ENCODE measurements at regions of chr2 and their contacts with region 1.

Region 1: DNA sequence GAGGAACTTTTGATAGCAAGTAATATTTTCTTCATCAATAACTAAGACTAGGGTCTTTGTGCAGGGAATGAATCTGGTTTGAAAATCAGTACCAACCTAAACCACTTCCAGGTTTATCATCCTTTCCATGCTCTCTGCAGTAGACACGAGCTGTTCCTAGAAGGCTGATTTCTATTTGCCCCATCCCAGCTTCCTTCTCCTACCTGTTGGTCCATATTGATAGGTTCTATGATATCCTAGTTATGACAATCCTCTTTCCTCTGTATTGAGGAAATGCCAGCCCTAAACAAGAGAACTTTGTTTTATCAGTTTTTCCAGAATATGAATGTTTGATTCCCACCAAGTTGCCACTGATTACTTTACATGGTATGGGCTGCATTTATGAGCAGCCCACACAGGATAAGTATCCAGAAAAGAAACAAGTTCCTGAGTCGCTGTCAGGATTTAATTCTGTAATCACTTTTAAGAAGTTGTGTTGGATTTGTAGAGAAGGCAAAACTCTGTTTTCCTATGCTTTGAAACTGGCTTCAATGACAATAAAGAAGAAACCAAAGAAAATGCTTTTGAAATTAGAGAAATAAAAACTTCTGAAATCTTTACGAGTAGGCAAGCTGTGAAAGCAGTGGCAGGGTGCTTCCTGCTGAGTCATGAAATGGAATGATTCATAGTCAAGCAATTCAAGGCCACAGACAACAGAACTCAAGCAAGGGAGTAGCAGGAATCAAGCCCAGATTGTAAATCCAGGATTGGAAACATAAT is 37.3 kb upstream of the TANK start:
- DNase-seq: peak; percentile 86
- H3K4me3 Mint-ChIP-seq: no peak overlapping the region
- H3K27ac Mint-ChIP-seq: peak overlapping the region; percentile 64
- H3K4me1 Mint-ChIP-seq: peaks cover 12% of the 10 kb centered on the region
- H3K27me3 Mint-ChIP-seq: no peaks in the 10 kb centered on the region
- CTCF ChIP-seq: no peak

Region 2: DNA sequence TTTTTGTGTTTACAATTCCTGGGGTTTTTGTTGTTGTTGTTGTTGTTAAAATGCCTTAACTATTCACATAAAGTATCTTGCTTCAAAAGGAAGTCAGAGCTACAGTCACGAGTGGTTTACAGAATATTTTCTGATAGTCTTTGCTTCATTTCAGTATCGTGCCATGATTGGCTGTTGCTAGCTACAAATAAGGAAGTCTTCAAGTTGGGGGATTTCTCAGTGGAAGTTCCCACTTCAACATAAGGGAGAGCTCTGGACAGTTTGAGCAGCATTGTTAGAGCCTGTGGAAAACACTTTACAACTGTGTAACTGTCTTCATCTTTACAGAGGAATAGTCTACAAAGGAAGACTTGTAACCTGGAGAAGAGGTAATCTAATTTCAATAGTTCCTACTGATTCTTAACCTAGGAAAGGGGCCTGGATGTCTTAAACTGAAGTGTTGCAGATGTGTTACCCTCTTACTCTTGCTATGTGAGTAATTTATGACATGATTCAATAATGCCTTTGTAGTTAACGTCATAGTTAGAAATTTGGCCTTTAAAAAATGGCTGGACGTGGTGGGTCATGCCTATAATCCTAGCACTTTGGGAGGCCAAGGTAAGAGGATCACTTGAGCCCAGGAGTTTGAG is 13.9 kb after region 1 on chr2:
- CTCF ChIA-PET with region 1: interaction called, 3 read pairs
- POLR2A ChIA-PET with region 1: interaction called, 12 read pairs
- intact Hi-C with region 1: no loop called
- DNase-seq: no peak
- H3K4me3 Mint-ChIP-seq: no peak overlapping the region
- H3K27ac Mint-ChIP-seq: no peak overlapping the region
- H3K4me1 Mint-ChIP-seq: peaks cover 24% of the 10 kb centered on the region
- H3K27me3 Mint-ChIP-seq: no peaks in the 10 kb centered on the region
- CTCF ChIP-seq: no peak